Activated CD4-positive, alpha-beta memory T cell treated with anti-CD3 and anti-CD28 coated beads for 36 hours (primary cell): ENCODE measurements at regions of chr12 and their contacts with region 1.

Region 1: DNA sequence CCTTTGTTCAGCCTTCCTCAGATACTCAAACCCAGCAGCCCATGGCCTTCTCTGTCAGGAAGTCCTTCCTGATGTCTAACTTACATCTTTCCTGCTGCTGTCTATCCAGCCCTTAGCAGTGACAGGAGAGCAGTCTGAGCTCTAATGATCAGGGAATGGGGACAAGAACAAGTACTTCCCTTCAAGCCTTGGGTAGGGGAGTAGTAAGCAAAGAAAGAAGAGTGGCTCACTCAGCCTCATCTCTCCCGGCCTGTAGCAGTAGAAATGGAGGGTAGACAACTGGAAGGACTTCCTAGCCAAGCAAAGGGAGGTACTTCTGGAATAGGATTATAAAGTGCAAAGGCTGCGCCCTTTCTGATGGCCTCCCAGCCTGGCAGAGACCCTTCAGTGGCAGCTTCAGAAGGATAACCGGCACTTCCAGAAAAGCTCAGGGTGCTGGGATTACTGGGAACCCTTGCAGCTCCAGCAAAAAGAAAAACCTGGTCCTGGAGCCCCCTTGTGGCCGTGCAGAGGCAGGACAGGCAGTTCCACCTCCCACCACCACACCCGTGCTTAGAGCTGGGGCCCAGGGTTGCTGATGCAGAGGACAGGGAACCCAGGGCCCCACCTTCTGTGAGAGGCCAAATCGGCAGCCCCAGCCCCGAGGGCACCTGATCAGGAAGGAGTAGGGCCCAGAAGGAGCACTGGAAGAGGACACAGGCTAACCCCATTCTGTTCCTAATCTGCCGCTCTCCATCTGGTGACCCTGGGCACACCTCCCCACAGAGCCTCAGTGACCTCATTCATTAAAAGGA is 12.4 kb upstream of the SMUG1 start:
- DNase-seq: peak; percentile 77
- H3K4me3 Mint-ChIP-seq: no peak overlapping the region
- H3K27ac Mint-ChIP-seq: no peak overlapping the region
- H3K4me1 Mint-ChIP-seq: peaks cover 3% of the 10 kb centered on the region
- H3K27me3 Mint-ChIP-seq: peaks cover 48% of the 10 kb centered on the region

Region 2: DNA sequence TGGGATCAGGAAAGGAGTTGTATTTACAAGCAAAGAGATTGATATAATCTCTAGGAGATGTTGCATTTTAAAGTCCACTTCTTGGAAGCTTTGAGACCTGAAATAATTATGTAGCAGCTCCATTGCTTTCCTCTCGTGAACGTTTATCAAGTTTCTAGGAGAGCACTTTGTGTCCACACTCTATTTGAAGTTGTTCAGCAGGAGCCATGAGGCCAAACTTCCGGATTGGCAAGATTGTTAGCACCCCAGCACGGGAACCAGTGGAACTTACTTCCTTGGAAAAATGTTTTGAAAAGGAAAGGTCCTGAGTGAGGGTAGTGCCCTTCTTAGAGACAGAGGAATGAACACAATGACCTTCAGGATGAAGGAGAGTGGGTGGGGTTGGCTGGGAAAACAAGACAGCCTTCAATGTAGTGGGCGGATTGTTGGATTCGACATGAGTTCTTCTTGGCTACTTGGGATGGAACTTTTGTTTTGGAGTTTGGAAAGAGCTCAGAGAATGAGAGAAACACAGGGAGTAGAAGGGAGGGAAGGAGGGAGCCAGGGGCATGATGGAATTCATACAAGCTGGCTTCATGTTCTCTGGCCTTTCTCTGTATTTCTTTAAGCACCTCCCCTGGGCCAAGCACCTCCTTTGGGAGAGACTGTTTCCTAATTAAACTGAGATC is 425.6 kb before region 1 on chr12:
- CTCF ChIA-PET with region 1: no interaction called
- POLR2A ChIA-PET with region 1: no interaction called
- intact Hi-C with region 1: no loop called
- DNase-seq: no peak
- H3K4me3 Mint-ChIP-seq: no peak overlapping the region
- H3K27ac Mint-ChIP-seq: no peak overlapping the region
- H3K4me1 Mint-ChIP-seq: no peaks in the 10 kb centered on the region
- H3K27me3 Mint-ChIP-seq: peaks cover 16% of the 10 kb centered on the region

Region 3: GRCh38 chr12:54053751-54054741 is 147.2 kb before region 1 on chr12 and contains the start of gene HOXC4:
- CTCF ChIA-PET with region 1: interaction called, 18 read pairs
- POLR2A ChIA-PET with region 1: no interaction called
- intact Hi-C with region 1: no loop called
- DNase-seq: no peak
- H3K4me3 Mint-ChIP-seq: peak within 1 kb of the TSS; percentile 33
- H3K27ac Mint-ChIP-seq: no peak within 1 kb of the TSS
- H3K4me1 Mint-ChIP-seq: peaks cover 28% of the 10 kb centered on the region
- H3K27me3 Mint-ChIP-seq: peaks cover 78% of the 10 kb centered on the region
- total RNA-seq, gene HOXC4: 0.17 TPM in 1 of 2 experiments, not detected in the other